ENCODE measurements at regions of chr7 and their contacts with region 1.

Region 1: DNA sequence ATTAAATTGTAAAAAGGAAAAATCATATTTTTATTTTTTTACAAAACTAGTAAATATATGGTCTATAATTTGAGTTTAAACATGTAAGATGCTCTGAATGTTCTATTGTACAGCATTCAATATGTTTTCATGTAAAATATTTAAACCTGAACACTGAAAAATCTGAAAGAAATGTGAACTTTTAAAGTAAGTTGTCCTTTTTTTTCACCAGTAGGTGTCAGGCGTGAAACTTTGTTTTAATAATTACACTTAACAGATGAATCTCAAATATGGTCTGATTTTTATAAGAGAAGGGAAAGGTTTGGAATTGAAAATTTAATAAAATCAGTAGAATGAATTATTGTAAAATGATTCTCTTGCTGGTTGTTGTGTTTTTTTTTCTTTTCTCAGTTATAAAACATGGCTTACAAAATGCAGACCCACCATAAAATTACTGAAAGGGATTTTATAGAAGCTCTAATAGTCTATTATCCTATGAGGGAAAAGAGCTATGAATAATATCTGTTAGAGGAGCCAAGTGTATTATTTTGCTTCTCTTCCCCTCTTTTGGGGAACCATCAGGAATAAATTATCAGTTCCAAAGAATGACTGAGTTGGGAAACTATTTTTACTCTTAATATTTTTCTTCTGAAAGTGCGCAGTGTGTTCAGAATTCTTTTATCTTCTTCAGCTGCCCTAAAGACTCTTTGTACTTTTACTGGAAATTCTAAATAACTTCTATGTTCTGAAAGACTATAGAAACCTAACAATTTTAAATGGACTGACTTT is 217.7 kb upstream of the FZD1 start:
- DNase-seq: peak; percentile 28
- ATAC-seq: peak; percentile 44
- H3K4me3 ChIP-seq: no peak overlapping the region
- H3K27ac ChIP-seq: no peak overlapping the region
- H3K4me1 ChIP-seq: no peaks in the 10 kb centered on the region; the same call in 1 of the 2 replicates
- H3K27me3 ChIP-seq: no peaks in the 10 kb centered on the region
- CTCF ChIP-seq: peak; percentile 36
- POLR2A ChIP-seq: no peak
- RAD21 ChIP-seq: peak; percentile 27

Region 2: GRCh38 chr7:91784463-91784862 is 738.0 kb after region 1 on chr7:
- CTCF ChIA-PET with region 1: no interaction called
- POLR2A ChIA-PET with region 1: no interaction called
- dilution Hi-C with region 1: no loop called
- in situ Hi-C with region 1: no loop called
- intact Hi-C with region 1: loop called (anchors 5 kb)
- DNase-seq: peak; percentile 61
- ATAC-seq: peak; percentile 70
- H3K4me3 ChIP-seq: no peak overlapping the region
- H3K27ac ChIP-seq: no peak overlapping the region
- H3K4me1 ChIP-seq: no peaks in the 10 kb centered on the region
- H3K27me3 ChIP-seq: no peaks in the 10 kb centered on the region; the same call in none of the 2 replicates
- CTCF ChIP-seq: peak; percentile 48
- POLR2A ChIP-seq: no peak
- RAD21 ChIP-seq: peak; percentile 62